ENCODE measurements at regions of chr1 and their contacts with region 1.

Region 1: DNA sequence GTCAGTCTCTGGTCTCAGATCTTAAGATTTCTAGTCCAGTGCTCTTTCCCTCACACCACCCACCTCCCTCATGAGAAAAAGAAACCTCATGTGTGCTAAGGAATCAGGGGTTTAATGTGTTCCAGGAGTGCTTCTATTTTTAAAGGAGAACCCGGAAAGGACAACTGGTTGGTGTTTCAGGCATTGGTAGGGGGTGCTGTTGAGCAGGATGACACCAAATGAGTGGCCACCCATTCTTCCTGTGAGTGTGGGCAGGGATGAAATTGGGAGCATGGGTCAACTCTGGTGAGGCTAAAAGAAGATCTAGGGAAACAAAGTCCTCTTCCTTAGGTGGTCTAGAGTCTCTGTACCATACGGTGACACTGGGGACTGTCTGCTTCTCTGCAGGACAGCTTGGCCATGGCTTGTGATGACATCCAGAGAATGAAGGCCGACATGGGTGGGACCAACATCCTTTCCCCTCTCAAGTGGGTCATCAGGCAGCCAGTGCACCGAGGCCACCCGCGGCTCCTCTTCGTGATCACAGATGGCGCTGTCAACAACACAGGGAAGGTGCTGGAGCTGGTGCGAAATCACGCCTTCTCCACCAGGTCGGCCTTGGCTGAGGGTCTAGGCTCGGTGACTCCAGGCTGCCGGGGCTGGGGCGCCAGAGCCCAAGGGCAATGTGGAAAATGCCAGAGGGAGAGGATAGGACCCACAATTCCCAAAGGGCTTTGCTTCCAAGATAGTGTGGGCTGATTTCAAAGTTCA is 39.3 kb downstream of the VWA5B1 start:
- DNase-seq: no peak
- ATAC-seq: peak; percentile 52; the same call in 1 of the 2 replicates
- H3K4me3 ChIP-seq: no peak overlapping the region
- H3K27ac ChIP-seq: no peak overlapping the region
- H3K4me1 ChIP-seq: no peaks in the 10 kb centered on the region
- H3K27me3 ChIP-seq: peaks cover 7% of the 10 kb centered on the region; the same call in 1 of the 2 replicates
- CTCF ChIP-seq: peak; percentile 30 to 48 (median 48); a peak in 4 of 6 replicates
- POLR2A ChIP-seq: no peak
- RAD21 ChIP-seq: peak; percentile 42

Region 2: DNA sequence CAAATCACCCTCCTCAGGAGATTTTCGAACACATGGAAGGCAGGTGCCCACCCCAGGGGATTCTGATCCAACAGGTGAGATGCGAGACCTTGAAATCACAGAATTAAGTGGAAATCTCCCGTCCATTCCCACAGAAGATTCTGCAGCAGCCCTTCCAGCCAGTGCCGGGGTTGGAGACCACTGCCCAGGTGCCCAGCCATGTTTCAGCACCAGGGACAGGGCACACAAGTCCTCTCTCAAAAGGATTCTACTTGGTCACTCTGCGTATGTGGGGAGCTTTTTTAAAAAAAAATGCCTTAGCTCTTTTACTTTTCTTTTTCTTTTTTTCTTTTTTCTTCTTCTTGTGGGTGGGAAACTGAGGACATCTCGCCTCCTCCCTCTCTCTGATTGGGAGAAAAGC is 41.4 kb after region 1 on chr1:
- CTCF ChIA-PET with region 1: no interaction called
- POLR2A ChIA-PET with region 1: no interaction called
- RAD21 ChIA-PET with region 1: no interaction called
- intact Hi-C with region 1: loop called (anchors 1 kb)
- DNase-seq: no peak
- ATAC-seq: no peak
- H3K4me3 ChIP-seq: no peak overlapping the region
- H3K27ac ChIP-seq: no peak overlapping the region
- H3K4me1 ChIP-seq: peaks cover 0 to 16% of the 10 kb centered on the region in 2 experiments; a peak in 2 of 4 replicates
- H3K27me3 ChIP-seq: peaks cover 8% of the 10 kb centered on the region; the same call in 1 of the 2 replicates
- CTCF ChIP-seq: no peak
- POLR2A ChIP-seq: no peak
- RAD21 ChIP-seq: no peak